ENCODE measurements at regions of chr16 and their contacts with region 1.

Region 1: GRCh38 chr16:67672739-67673662 is 6.4 kb downstream of the C16orf86 start:
- DNase-seq: peak; percentile 74 to 90 (median 82)
- H3K4me3 ChIP-seq: no peak overlapping the region
- H3K27ac ChIP-seq: peak overlapping the region; percentile 10 to 87 (median 47)
- H3K4me1 ChIP-seq: peaks cover 12 to 29% of the 10 kb centered on the region in 2 donors
- H3K27me3 ChIP-seq: no peaks in the 10 kb centered on the region
- CTCF ChIP-seq: peak; percentile 66 to 88 (median 82)
- POLR2A ChIP-seq: no peak

Region 2: DNA sequence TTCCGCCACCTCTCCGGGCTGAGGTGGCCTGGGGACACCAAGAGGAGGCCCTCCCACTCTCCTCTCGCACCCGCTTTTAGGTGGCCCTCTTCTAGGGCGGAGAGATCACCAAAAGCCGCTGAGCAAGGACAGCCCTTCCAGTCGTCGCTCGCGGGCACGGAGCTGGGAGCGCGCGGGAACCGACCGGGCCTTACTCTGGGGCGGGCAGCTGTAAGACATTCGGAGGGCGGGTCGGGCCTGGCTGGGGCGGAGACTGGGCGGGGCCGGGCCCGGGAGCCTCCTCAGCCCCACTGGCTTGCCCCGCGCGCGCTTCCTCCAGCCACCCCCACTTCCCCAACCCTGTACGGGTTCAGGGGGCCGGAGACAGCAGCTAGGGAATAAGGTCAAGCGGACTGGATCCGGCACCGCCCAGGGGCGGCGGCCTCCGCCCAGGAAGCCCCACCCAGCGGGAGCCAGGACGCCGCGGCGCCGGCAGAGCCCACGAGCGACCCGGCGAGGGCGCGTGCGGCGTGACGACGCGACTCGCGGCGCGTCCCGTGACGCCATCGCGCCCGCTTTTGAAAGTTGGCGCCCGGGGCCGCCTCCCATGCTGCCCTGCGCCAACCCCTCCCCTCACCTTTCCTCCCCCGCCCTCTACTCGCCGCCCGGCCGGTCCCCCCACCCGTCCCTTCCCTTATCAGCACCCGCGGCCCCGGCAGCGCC is 111.0 kb before region 1 on chr16:
- intact Hi-C with region 1: no loop called
- DNase-seq: peak; percentile 96 to 98 (median 97)
- H3K4me3 ChIP-seq: peak overlapping the region in 3 of 4 donors; percentile 13 to 99 (median 85)
- H3K27ac ChIP-seq: peak overlapping the region; percentile 73 to 99 (median 99)
- H3K4me1 ChIP-seq: peaks cover 6 to 21% of the 10 kb centered on the region in 2 donors
- H3K27me3 ChIP-seq: no peaks in the 10 kb centered on the region
- CTCF ChIP-seq: no peak
- POLR2A ChIP-seq: peak in 1 of 2 donors; percentile 74

Region 3: DNA sequence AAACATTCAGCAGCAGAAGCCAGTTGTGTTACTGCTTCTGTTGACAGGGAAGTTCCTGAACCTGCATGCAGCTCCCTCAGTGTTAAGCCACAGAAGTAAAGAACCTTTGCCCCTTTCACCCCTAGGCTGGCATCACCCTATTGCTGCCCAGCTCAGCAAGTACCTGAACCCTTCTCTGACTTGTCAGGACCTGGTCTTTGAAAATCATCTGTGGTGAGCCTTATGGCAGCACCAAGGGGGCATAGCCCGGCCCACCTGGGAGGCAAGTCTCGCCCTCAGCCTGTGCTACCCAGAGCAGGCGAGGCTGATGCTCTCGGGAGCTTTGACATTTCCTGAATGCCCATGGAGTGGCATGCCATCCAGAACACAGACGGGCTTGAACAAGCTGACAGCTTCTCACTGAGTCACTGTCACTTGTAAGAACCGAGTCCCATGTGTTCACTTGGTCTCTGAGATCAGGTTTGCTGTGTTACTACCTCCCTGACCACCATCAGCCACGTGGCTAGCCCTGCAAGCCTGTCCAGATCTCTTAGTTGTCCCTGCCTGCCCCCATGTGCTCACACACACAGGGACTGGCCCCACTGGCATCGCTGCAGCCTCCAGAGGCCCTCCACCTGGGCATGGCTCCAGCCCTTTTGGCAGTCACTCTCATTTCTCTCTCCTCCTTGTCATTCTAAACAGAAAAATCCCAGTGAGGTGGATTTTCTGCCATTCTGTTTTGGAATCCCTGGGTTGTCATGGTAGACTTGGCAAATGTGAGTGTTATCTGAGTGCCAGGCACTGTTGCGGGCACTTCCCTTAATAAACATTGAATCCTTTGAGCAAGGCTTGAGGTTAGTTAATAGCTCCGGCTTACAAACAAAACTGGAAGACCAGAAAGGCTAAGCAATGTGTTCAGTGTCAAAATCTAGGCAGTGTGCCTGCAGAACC is 31.0 kb before region 1 on chr16:
- intact Hi-C with region 1: no loop called
- DNase-seq: peak; percentile 64 to 90 (median 88)
- H3K4me3 ChIP-seq: no peak overlapping the region
- H3K27ac ChIP-seq: peak overlapping the region in 1 of 5 donors; percentile 10
- H3K4me1 ChIP-seq: peaks cover 0 to 17% of the 10 kb centered on the region in 2 donors
- H3K27me3 ChIP-seq: peaks cover 17% of the 10 kb centered on the region
- CTCF ChIP-seq: no peak
- POLR2A ChIP-seq: peak in 1 of 2 donors; percentile 6

Region 4: DNA sequence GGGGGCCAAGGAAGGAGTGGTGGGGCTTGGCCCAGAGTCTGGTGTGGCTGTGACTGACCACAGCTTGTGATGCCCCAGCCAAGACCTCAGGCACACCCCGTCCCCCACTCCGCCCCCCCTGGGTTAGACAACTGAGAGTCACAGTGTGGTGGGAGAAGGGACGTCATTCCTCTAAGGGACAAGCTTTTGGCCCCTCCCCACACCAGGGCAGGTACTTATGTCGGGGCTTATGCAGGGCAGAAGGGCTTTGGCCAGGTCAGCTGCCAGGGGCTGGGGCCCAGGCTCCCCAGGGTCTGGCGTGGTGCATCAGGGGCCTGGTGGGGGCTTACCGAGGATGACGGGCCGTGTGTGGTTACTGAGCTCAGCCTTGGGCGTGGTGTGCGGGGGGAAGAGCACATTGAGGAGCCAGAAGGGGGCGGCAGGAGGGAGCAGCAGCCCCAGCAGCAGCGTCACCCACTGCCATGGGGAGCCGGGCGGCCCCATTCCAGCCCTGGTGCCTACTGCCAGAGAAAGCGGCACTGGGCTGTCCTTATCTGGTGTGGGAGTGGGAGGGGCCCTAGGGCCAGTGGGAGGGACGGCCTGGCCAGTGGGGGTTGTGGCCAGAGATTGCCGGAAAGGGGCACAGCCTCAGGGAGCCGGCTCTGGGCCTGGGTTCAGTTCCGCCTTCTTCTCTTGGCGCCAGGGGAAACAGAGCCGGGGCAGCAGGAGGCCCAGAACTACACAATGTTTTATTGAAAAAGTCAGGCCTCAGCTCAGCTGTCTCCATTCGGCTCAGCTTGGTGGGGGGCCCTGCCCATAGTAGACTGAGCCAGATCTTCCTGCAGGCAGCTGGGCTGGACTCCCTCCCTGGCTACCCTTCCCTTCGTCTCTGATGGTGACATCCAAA is 270.9 kb after region 1 on chr16 and contains the start of gene LCAT:
- intact Hi-C with region 1: no loop called
- DNase-seq: peak in 6 of 7 donors; percentile 69 to 80 (median 78)
- H3K4me3 ChIP-seq: no peak within 1 kb of the TSS
- H3K27ac ChIP-seq: peak within 1 kb of the TSS in 4 of 5 donors; percentile 1 to 67 (median 25)
- H3K4me1 ChIP-seq: peaks cover 0 to 17% of the 10 kb centered on the region in 2 donors
- H3K27me3 ChIP-seq: no peaks in the 10 kb centered on the region
- CTCF ChIP-seq: peak in 1 of 6 experiments; percentile 1
- POLR2A ChIP-seq: peak in 1 of 2 donors; percentile 60
- total RNA-seq, gene LCAT: 4.1 to 27.6 (median 9.4) TPM

Region 5: GRCh38 chr16:68031951-68032350 is 358.9 kb after region 1 on chr16:
- intact Hi-C with region 1: loop called in 1 of 2 experiments (anchors 10 kb)
- DNase-seq: no peak
- H3K4me3 ChIP-seq: no peak overlapping the region
- H3K27ac ChIP-seq: no peak overlapping the region
- H3K4me1 ChIP-seq: no peaks in the 10 kb centered on the region
- H3K27me3 ChIP-seq: no peaks in the 10 kb centered on the region
- CTCF ChIP-seq: no peak
- POLR2A ChIP-seq: no peak

Measured in adrenal gland (tissue), 19 donors.